HepG2 (cell line): ENCODE measurements at regions of chr9 and their contacts with region 1.

Region 1: GRCh38 chr9:105318729-105319191 is 74.3 kb downstream of the SLC44A1 start:
- DNase-seq: peak; percentile 79
- ATAC-seq: peak; percentile 89
- H3K4me3 ChIP-seq: no peak overlapping the region; a peak in 1 of 6 replicates
- H3K27ac ChIP-seq: peak overlapping the region; percentile 65
- H3K4me1 ChIP-seq: peaks cover 33% of the 10 kb centered on the region
- H3K27me3 ChIP-seq: no peaks in the 10 kb centered on the region
- CTCF ChIP-seq: no peak
- EP300 ChIP-seq: peak in 1 of 2 experiments; percentile 62; a peak in 2 of 4 replicates
- POLR2A ChIP-seq: no peak
- RAD21 ChIP-seq: no peak

Region 2: GRCh38 chr9:105244003-105244733 is 74.6 kb before region 1 on chr9 and contains the start of gene SLC44A1:
- CTCF ChIA-PET with region 1: no interaction called
- POLR2A ChIA-PET with region 1: interaction called, 12 read pairs
- in situ Hi-C with region 1: no loop called
- intact Hi-C with region 1: no loop called
- DNase-seq: peak; percentile 86
- ATAC-seq: peak; percentile 97
- H3K4me3 ChIP-seq: peak within 1 kb of the TSS; percentile 93 to 98 (median 97)
- H3K27ac ChIP-seq: peak within 1 kb of the TSS; percentile 68
- H3K4me1 ChIP-seq: peaks cover 63% of the 10 kb centered on the region
- H3K27me3 ChIP-seq: no peaks in the 10 kb centered on the region
- CTCF ChIP-seq: peak; percentile 54; the same call in 1 of the 2 replicates
- EP300 ChIP-seq: peak; percentile 64 to 81; a peak in 3 of 4 replicates
- POLR2A ChIP-seq: peak; percentile 57 to 62
- RAD21 ChIP-seq: peak; percentile 81; the same call in 1 of the 2 replicates
- total RNA-seq, gene SLC44A1: 30.4 and 40.8 TPM in 2 replicates

Region 3: DNA sequence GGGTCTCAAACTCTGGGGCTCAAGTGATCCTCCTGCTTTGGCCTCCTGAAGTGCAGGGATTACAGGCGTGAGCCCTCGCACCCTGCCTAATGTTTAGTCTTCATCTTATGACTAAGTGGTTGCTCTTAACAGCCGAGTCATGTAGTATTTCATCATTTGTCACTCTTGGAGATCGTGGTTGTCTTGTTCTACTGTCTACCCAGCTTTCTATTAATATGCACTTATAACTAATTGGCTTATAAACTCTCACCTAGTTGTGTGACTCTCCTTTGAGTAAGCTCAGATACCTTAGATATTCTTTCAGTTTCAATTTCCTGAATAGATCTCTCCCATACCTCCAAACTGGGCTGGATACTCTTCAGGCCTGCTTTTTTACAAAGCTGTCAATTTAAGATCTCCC is 54.4 kb before region 1 on chr9:
- CTCF ChIA-PET with region 1: no interaction called
- POLR2A ChIA-PET with region 1: no interaction called
- in situ Hi-C with region 1: no loop called
- intact Hi-C with region 1: no loop called
- DNase-seq: no peak
- ATAC-seq: no peak
- H3K4me3 ChIP-seq: no peak overlapping the region
- H3K27ac ChIP-seq: no peak overlapping the region
- H3K4me1 ChIP-seq: peaks cover 24% of the 10 kb centered on the region
- H3K27me3 ChIP-seq: no peaks in the 10 kb centered on the region
- CTCF ChIP-seq: no peak
- EP300 ChIP-seq: no peak
- POLR2A ChIP-seq: no peak
- RAD21 ChIP-seq: no peak

Region 4: DNA sequence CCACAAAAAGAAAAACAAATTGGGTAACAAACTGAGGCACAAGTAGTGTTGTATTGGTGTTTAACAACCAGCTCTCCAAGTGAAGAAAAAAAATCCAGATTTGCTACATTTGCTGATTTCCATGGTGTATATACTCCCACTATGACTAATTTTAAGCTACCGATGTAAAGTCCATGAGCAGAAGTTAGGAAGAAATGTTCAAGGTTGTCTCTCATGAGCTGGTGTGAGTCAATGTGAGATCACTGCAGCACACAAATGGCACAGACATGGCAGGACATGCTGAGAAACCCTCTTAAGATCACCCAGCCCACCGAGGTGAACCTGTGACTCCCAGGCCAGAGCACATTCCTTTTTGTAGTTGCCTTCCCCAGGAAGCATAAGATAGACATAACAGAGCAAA is 38.1 kb before region 1 on chr9:
- CTCF ChIA-PET with region 1: no interaction called
- POLR2A ChIA-PET with region 1: no interaction called
- in situ Hi-C with region 1: no loop called
- intact Hi-C with region 1: no loop called
- DNase-seq: peak; percentile 32
- ATAC-seq: no peak
- H3K4me3 ChIP-seq: no peak overlapping the region
- H3K27ac ChIP-seq: no peak overlapping the region
- H3K4me1 ChIP-seq: peaks cover 27% of the 10 kb centered on the region
- H3K27me3 ChIP-seq: no peaks in the 10 kb centered on the region
- CTCF ChIP-seq: no peak
- EP300 ChIP-seq: no peak
- POLR2A ChIP-seq: no peak
- RAD21 ChIP-seq: no peak

Region 5: DNA sequence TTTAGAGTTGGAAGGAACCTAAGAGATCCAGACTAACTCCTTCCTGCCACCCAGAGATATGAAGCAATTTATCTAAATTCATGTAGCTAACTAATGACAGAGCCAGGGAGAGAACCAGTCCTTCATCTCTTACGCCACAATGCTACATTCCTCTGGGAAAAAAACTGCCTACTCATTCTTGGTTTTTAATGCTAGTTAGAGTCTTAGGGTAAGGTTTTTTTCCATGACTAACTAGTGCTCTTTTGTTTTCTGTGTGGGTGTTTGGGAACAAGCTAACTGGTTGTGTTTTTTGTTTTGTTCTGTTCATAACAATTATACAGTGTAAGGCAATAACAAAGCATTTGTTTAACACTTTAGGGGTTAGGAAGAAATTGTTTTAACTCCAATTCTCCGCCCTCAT is 21.9 kb before region 1 on chr9:
- CTCF ChIA-PET with region 1: no interaction called
- POLR2A ChIA-PET with region 1: interaction called, 32 read pairs
- in situ Hi-C with region 1: no loop called
- intact Hi-C with region 1: no loop called
- DNase-seq: peak; percentile 90
- ATAC-seq: peak; percentile 79
- H3K4me3 ChIP-seq: no peak overlapping the region
- H3K27ac ChIP-seq: peak overlapping the region; percentile 50
- H3K4me1 ChIP-seq: peaks cover 64% of the 10 kb centered on the region
- H3K27me3 ChIP-seq: no peaks in the 10 kb centered on the region
- CTCF ChIP-seq: no peak
- EP300 ChIP-seq: peak in 1 of 2 experiments; percentile 68; a peak in 2 of 4 replicates
- POLR2A ChIP-seq: no peak
- RAD21 ChIP-seq: no peak

Region 6: DNA sequence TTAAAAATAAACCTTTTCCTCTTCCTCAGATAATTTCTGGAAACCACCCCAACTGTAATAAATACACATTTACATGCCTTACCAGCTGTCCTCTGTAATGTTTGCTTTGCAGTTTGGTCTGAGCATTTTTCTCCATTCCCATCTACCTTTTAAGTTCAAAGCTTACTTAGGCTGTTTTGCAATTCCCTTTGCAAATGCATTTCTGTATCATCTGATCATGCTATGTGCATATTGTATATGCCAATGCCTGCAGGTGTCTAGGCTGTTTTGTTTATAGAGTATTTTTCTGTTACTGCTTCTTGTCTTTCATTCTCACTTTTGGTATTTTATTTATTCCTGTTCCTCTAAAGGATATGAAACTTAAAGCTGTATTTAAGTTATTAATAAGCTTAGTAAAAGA is 12.0 kb after region 1 on chr9:
- CTCF ChIA-PET with region 1: no interaction called
- POLR2A ChIA-PET with region 1: interaction called, 32 read pairs
- in situ Hi-C with region 1: no loop called
- intact Hi-C with region 1: no loop called
- DNase-seq: peak; percentile 89
- ATAC-seq: peak; percentile 91
- H3K4me3 ChIP-seq: peak overlapping the region in 1 of 3 experiments; percentile 3; a peak in 1 of 6 replicates
- H3K27ac ChIP-seq: peak overlapping the region; percentile 69
- H3K4me1 ChIP-seq: peaks cover 53% of the 10 kb centered on the region
- H3K27me3 ChIP-seq: no peaks in the 10 kb centered on the region
- CTCF ChIP-seq: no peak
- EP300 ChIP-seq: peak in 1 of 2 experiments; percentile 77; a peak in 2 of 4 replicates
- POLR2A ChIP-seq: no peak
- RAD21 ChIP-seq: no peak